ENCODE measurements at regions of chr22 and their contacts with region 1.

Region 1: GRCh38 chr22:41468381-41469217 is at the starts of genes ACO2 and PHF5A:
- DNase-seq: peak; percentile 91 to 100 (median 98)
- ATAC-seq: peak; percentile 89 to 90
- H3K4me3 Mint-ChIP-seq: peak within 1 kb of the TSS; percentile 89 to 93 (median 92)
- H3K27ac Mint-ChIP-seq: peak within 1 kb of the TSS; percentile 98 to 100 (median 100)
- H3K4me1 Mint-ChIP-seq: peaks cover 17 to 70% (median 54%) of the 10 kb centered on the region in 4 donors
- H3K27me3 Mint-ChIP-seq: no peaks in the 10 kb centered on the region
- polyA plus RNA-seq, gene ACO2: 64.2 to 91.9 (median 72.3) TPM
- polyA plus RNA-seq, gene PHF5A: 17.2 to 21.4 (median 17.9) TPM

Region 2: GRCh38 chr22:41285820-41286638 is 182.6 kb before region 1 on chr22 and contains the start of gene RANGAP1:
- POLR2A ChIA-PET with region 1: interaction called, 15 read pairs
- DNase-seq: peak; percentile 93 to 99 (median 98)
- ATAC-seq: peak; percentile 88 to 94
- H3K4me3 Mint-ChIP-seq: peak within 1 kb of the TSS; percentile 90 to 99 (median 96)
- H3K27ac Mint-ChIP-seq: peak within 1 kb of the TSS; percentile 91 to 100 (median 99)
- H3K4me1 Mint-ChIP-seq: peaks cover 12 to 43% (median 36%) of the 10 kb centered on the region in 4 donors
- H3K27me3 Mint-ChIP-seq: no peaks in the 10 kb centered on the region
- polyA plus RNA-seq, gene RANGAP1: 18.9 to 30.1 (median 23.8) TPM

Region 3: DNA sequence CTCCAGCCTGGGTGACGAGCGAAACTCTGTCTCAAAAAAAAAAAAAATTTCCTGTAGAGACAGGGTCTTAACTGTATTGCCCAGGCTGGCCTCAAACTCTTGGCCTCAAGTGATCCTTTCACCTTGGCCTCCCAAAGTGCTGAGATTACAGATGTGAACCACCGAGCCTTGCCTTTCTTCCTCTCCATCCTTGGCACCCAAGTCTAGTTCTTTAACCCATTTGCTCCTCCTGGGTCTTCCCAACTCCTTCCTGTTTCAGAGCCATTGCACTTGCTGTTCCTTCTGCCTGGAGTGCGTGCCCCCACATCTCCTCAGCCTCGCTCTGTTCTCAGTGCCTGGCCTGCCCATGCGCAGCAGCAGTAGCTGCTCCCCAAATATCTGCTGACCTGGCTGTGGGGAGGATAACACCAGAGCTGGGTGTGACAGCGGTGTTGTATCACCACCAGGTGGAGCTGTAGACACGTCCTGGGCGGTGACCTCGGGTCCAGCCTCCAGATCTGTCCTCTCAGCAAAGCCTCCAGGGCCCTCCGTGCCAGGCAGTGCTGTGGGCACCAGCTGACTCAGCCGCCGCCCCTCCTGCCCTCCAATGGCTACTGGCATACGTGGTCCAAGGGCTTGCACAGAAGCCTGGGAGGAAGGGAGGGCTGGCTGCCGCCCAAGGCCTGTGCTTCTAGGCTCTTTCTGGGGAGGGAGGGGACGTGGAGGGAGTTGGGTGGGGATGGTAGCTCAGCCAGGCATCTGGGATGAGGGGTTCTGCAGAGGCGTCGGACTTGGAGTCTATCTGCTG is 64.9 kb before region 1 on chr22:
- POLR2A ChIA-PET with region 1: interaction called, 13 read pairs
- DNase-seq: peak; percentile 62 to 91 (median 81)
- ATAC-seq: peak; percentile 98 to 99
- H3K4me3 Mint-ChIP-seq: peak overlapping the region in 2 of 10 donors; percentile 14 to 54
- H3K27ac Mint-ChIP-seq: peak overlapping the region in 6 of 10 donors; percentile 41 to 94 (median 64)
- H3K4me1 Mint-ChIP-seq: peaks cover 6 to 15% (median 10%) of the 10 kb centered on the region in 4 donors
- H3K27me3 Mint-ChIP-seq: peaks cover 0 to 1% (median 0%) of the 10 kb centered on the region in 5 donors

Region 4: DNA sequence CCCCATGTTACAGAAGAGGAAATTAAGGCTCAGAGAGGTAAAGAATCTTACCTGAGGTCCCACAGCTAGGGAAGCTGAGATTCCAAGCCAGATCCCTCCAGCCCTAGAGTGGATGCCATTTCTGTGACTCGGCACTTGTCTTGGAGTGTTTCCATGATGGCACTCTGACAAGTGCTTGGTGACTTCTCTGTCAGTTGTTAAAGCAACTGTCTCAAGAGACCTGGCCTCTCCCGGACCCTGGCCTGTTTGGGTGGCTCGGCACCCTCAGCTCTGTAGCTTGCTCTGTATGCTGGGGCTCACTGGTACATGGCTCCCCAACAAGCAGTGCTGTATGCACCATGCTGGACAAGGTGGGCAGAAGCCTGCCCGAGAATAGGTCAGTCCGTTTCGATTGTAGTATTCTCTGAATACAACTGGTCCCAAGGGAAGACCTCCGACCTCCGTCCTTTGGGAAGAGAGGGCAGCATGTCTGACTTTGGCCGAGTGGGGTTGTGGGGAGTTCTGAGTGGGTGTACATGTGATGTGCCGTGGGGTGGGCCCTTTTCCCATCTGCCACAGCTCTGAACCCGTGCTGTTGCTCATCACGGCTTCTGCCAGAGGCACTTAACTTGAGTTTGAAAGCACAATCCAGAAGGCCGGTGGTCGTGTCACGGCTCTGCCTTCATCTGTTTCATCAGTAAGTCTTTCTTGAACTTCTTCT is 12.7 kb after region 1 on chr22:
- POLR2A ChIA-PET with region 1: no interaction called
- DNase-seq: no peak
- ATAC-seq: no peak
- H3K4me3 Mint-ChIP-seq: no peak overlapping the region
- H3K27ac Mint-ChIP-seq: peak overlapping the region in 2 of 10 donors; percentile 19 to 51
- H3K4me1 Mint-ChIP-seq: peaks cover 16 to 75% (median 56%) of the 10 kb centered on the region in 4 donors
- H3K27me3 Mint-ChIP-seq: no peaks in the 10 kb centered on the region

Region 5: GRCh38 chr22:41524809-41525452 is 56.3 kb after region 1 on chr22:
- POLR2A ChIA-PET with region 1: interaction called, 13 read pairs
- DNase-seq: peak; percentile 45 to 89 (median 70)
- ATAC-seq: peak; percentile 88 to 97
- H3K4me3 Mint-ChIP-seq: peak overlapping the region in 7 of 10 donors; percentile 11 to 49 (median 38)
- H3K27ac Mint-ChIP-seq: peak overlapping the region in 9 of 10 donors; percentile 31 to 94 (median 89)
- H3K4me1 Mint-ChIP-seq: peaks cover 9 to 27% (median 21%) of the 10 kb centered on the region in 4 donors
- H3K27me3 Mint-ChIP-seq: no peaks in the 10 kb centered on the region

Measured in naive thymus-derived CD8-positive, alpha-beta T cell (primary cell).